CD14-positive monocyte (primary cell): ENCODE measurements at regions of chr4 and their contacts with region 1.

Region 1: GRCh38 chr4:102780476-102781144 is 19.8 kb upstream of the MANBA start:
- DNase-seq: peak; percentile 74 to 92 (median 83)
- H3K4me3 ChIP-seq: no peak overlapping the region
- H3K4me3 Mint-ChIP-seq: no peak overlapping the region
- H3K27ac ChIP-seq: peak overlapping the region in 1 of 2 donors; percentile 52
- H3K27ac Mint-ChIP-seq: peak overlapping the region in 3 of 7 donors; percentile 3 to 76 (median 74)
- H3K4me1 ChIP-seq: peaks cover 20 to 26% of the 10 kb centered on the region in 2 donors
- H3K4me1 Mint-ChIP-seq: peaks cover 24% of the 10 kb centered on the region
- H3K27me3 ChIP-seq: no peaks in the 10 kb centered on the region
- H3K27me3 Mint-ChIP-seq: peaks cover 0 to 7% (median 0%) of the 10 kb centered on the region in 3 donors
- CTCF ChIP-seq: no peak

Region 2: GRCh38 chr4:102129810-102130209 is 650.8 kb before region 1 on chr4:
- intact Hi-C with region 1: no loop called
- DNase-seq: no peak
- H3K4me3 ChIP-seq: no peak overlapping the region
- H3K4me3 Mint-ChIP-seq: no peak overlapping the region
- H3K27ac ChIP-seq: no peak overlapping the region
- H3K27ac Mint-ChIP-seq: no peak overlapping the region
- H3K4me1 ChIP-seq: no peaks in the 10 kb centered on the region
- H3K4me1 Mint-ChIP-seq: no peaks in the 10 kb centered on the region
- H3K27me3 ChIP-seq: no peaks in the 10 kb centered on the region
- H3K27me3 Mint-ChIP-seq: peaks cover 0 to 1% (median 0%) of the 10 kb centered on the region in 3 donors
- CTCF ChIP-seq: no peak

Region 3: DNA sequence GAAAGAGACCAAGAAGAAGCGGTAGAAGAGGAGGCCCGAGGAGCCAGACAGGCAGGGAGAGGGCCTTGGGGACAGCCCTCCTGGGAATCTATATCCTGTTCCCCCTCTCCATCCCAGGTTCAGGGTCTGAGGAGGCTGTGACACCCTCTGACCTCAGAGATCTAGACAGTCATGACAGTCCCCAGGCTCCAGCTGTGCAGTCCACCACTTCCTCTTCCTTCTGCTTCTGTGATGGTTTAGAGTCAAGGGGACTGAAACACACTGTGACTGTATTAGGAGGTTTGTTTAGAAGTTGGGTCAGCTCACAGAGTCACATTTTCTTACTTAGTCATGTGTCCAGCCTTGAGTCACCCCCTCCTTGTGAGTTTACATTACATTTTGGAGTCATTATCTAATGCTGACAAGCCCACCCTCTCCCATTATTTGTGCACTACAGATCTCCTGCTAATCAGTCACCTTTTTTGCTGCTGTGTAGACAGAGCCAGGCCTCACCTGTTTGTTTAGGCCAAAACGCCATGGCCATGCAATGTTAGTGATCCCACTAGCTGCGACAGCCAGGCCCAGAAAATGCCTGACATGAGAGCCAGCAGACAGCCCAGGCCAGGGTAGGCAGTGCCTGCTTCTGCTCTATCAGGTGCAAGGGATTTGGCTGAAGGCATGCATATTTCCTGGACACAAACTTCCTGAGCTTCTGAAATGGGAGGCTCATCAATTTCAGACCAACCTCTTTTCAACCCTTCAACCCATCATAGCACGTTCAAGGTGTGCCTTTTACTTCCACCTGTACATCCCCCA is 45.8 kb before region 1 on chr4:
- intact Hi-C with region 1: loop called in 1 of 2 experiments (anchors 10 kb)
- DNase-seq: peak; percentile 86 to 96 (median 86)
- H3K4me3 ChIP-seq: no peak overlapping the region
- H3K4me3 Mint-ChIP-seq: no peak overlapping the region
- H3K27ac ChIP-seq: peak overlapping the region; percentile 83 to 95
- H3K27ac Mint-ChIP-seq: peak overlapping the region; percentile 93 to 97 (median 94)
- H3K4me1 ChIP-seq: peaks cover 19 to 29% of the 10 kb centered on the region in 2 donors
- H3K4me1 Mint-ChIP-seq: peaks cover 44% of the 10 kb centered on the region
- H3K27me3 ChIP-seq: no peaks in the 10 kb centered on the region
- H3K27me3 Mint-ChIP-seq: no peaks in the 10 kb centered on the region
- CTCF ChIP-seq: no peak